Naive thymus-derived CD4-positive, alpha-beta T cell (primary cell): ENCODE measurements at regions of chr2 and their contacts with region 1.

Region 1: GRCh38 chr2:30711646-30712085 is 95.6 kb downstream of the CAPN13 start:
- DNase-seq: peak; percentile 50 to 89 (median 86)
- ATAC-seq: peak; percentile 96
- H3K4me3 ChIP-seq: no peak overlapping the region
- H3K4me3 Mint-ChIP-seq: no peak overlapping the region
- H3K27ac ChIP-seq: no peak overlapping the region
- H3K27ac Mint-ChIP-seq: peak overlapping the region in 1 of 9 donors; percentile 8
- H3K4me1 ChIP-seq: no peaks in the 10 kb centered on the region
- H3K4me1 Mint-ChIP-seq: peaks cover 0 to 8% (median 5%) of the 10 kb centered on the region in 7 donors
- H3K27me3 ChIP-seq: no peaks in the 10 kb centered on the region
- H3K27me3 Mint-ChIP-seq: peaks cover 0 to 4% (median 0%) of the 10 kb centered on the region in 5 donors

Region 2: DNA sequence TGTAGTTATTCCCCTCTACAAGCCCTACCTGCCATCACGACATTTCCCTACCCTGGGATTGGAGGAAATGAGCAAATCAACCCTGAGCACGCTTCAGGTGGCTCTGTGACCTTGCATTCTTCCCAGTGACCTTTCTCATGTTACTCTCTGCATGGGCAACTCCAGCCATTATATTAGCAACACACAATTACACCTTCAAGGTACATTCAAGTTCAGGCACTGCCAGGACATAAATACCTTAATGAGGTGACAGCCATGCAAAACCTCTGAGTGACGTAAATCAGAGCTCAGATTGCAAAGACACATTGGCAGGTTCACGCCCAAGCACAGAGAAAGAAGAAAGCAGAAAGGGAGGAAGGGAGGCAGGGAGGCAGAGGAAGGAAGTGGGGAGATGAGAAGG is 721.5 kb before region 1 on chr2:
- CTCF ChIA-PET with region 1: no interaction called
- POLR2A ChIA-PET with region 1: no interaction called
- intact Hi-C with region 1: no loop called
- DNase-seq: no peak
- ATAC-seq: no peak
- H3K4me3 ChIP-seq: no peak overlapping the region
- H3K4me3 Mint-ChIP-seq: no peak overlapping the region
- H3K27ac ChIP-seq: no peak overlapping the region
- H3K27ac Mint-ChIP-seq: no peak overlapping the region
- H3K4me1 ChIP-seq: no peaks in the 10 kb centered on the region
- H3K4me1 Mint-ChIP-seq: no peaks in the 10 kb centered on the region
- H3K27me3 ChIP-seq: no peaks in the 10 kb centered on the region
- H3K27me3 Mint-ChIP-seq: peaks cover 2 to 18% (median 12%) of the 10 kb centered on the region in 5 donors

Region 3: GRCh38 chr2:30106543-30106942 is 605.1 kb before region 1 on chr2:
- CTCF ChIA-PET with region 1: no interaction called
- POLR2A ChIA-PET with region 1: no interaction called
- intact Hi-C with region 1: no loop called
- DNase-seq: no peak
- ATAC-seq: no peak
- H3K4me3 ChIP-seq: no peak overlapping the region
- H3K4me3 Mint-ChIP-seq: no peak overlapping the region
- H3K27ac ChIP-seq: no peak overlapping the region
- H3K27ac Mint-ChIP-seq: no peak overlapping the region
- H3K4me1 ChIP-seq: no peaks in the 10 kb centered on the region
- H3K4me1 Mint-ChIP-seq: no peaks in the 10 kb centered on the region
- H3K27me3 ChIP-seq: no peaks in the 10 kb centered on the region
- H3K27me3 Mint-ChIP-seq: peaks cover 0 to 18% (median 5%) of the 10 kb centered on the region in 5 donors

Region 4: DNA sequence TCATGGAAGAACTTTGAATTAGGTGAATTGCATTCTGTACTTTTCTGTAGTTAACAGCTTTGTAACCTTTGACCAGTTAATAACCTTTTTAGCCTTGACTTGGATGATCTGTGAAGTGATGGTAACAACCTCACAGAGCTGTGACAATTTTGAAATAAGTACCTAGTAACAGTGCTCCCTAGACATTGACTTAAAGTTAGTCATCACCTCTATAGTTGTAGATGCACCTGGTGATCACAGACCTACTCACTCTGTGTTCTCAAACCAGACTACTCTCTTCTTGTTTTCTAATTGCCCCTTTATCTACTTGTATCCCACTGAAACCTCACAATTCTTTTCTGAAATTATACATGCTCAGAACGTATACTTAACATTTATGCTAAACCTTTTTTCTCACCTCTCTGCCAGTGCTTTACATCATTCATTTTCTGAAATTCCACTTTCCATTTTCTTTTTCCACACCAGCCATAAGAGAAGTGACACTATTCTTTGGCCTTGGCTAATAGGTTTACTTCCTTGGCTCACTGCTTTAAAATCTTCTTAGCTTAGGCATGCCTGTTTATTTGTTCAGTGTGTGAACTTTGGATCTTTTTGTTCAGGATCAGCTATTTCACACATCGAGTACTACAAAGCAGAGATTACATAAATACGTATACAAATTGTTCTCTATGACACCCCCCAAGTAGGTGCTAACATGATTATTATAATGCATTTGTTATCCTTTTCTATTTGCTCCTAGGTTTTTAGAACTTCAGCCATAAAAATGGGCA is 555.6 kb before region 1 on chr2:
- CTCF ChIA-PET with region 1: interaction called, 14 read pairs
- POLR2A ChIA-PET with region 1: no interaction called
- intact Hi-C with region 1: no loop called
- DNase-seq: no peak
- ATAC-seq: no peak
- H3K4me3 ChIP-seq: no peak overlapping the region
- H3K4me3 Mint-ChIP-seq: peak overlapping the region in 1 of 10 donors; percentile 19
- H3K27ac ChIP-seq: no peak overlapping the region
- H3K27ac Mint-ChIP-seq: peak overlapping the region in 6 of 9 donors; percentile 3 to 77 (median 44)
- H3K4me1 ChIP-seq: peaks cover 0 to 14% of the 10 kb centered on the region in 2 donors
- H3K4me1 Mint-ChIP-seq: peaks cover 11 to 58% (median 49%) of the 10 kb centered on the region in 7 donors
- H3K27me3 ChIP-seq: no peaks in the 10 kb centered on the region
- H3K27me3 Mint-ChIP-seq: no peaks in the 10 kb centered on the region

Region 5: GRCh38 chr2:30231212-30231995 is 480.3 kb before region 1 on chr2 and contains the start of gene LBH:
- CTCF ChIA-PET with region 1: interaction called, 5 read pairs
- POLR2A ChIA-PET with region 1: interaction called, 7 read pairs
- intact Hi-C with region 1: loop called (anchors 5 to 10 kb)
- DNase-seq: peak; percentile 74 to 92 (median 88)
- ATAC-seq: peak; percentile 72
- H3K4me3 ChIP-seq: peak within 1 kb of the TSS; percentile 75
- H3K4me3 Mint-ChIP-seq: peak within 1 kb of the TSS; percentile 87 to 98 (median 94)
- H3K27ac ChIP-seq: peak within 1 kb of the TSS; percentile 97
- H3K27ac Mint-ChIP-seq: peak within 1 kb of the TSS; percentile 87 to 100 (median 96)
- H3K4me1 ChIP-seq: peaks cover 49 to 55% of the 10 kb centered on the region in 2 donors
- H3K4me1 Mint-ChIP-seq: peaks cover 26 to 65% (median 57%) of the 10 kb centered on the region in 7 donors
- H3K27me3 ChIP-seq: no peaks in the 10 kb centered on the region
- H3K27me3 Mint-ChIP-seq: peaks cover 0 to 8% (median 0%) of the 10 kb centered on the region in 5 donors
- total RNA-seq, gene LBH: 146 to 517 (median 192) TPM

Region 6: GRCh38 chr2:30503007-30503694 is 208.5 kb before region 1 on chr2:
- CTCF ChIA-PET with region 1: interaction called, 3 read pairs
- POLR2A ChIA-PET with region 1: no interaction called
- intact Hi-C with region 1: loop called in 1 of 2 experiments (anchors 2 kb)
- DNase-seq: peak in 6 of 9 donors; percentile 34 to 65 (median 54)
- ATAC-seq: peak; percentile 96
- H3K4me3 ChIP-seq: no peak overlapping the region
- H3K4me3 Mint-ChIP-seq: peak overlapping the region in 9 of 10 donors; percentile 23 to 76 (median 65)
- H3K27ac ChIP-seq: peak overlapping the region; percentile 49
- H3K27ac Mint-ChIP-seq: peak overlapping the region in 8 of 9 donors; percentile 79 to 92 (median 85)
- H3K4me1 ChIP-seq: peaks cover 18 to 28% of the 10 kb centered on the region in 2 donors
- H3K4me1 Mint-ChIP-seq: peaks cover 22 to 51% (median 46%) of the 10 kb centered on the region in 7 donors
- H3K27me3 ChIP-seq: no peaks in the 10 kb centered on the region
- H3K27me3 Mint-ChIP-seq: no peaks in the 10 kb centered on the region

Region 7: DNA sequence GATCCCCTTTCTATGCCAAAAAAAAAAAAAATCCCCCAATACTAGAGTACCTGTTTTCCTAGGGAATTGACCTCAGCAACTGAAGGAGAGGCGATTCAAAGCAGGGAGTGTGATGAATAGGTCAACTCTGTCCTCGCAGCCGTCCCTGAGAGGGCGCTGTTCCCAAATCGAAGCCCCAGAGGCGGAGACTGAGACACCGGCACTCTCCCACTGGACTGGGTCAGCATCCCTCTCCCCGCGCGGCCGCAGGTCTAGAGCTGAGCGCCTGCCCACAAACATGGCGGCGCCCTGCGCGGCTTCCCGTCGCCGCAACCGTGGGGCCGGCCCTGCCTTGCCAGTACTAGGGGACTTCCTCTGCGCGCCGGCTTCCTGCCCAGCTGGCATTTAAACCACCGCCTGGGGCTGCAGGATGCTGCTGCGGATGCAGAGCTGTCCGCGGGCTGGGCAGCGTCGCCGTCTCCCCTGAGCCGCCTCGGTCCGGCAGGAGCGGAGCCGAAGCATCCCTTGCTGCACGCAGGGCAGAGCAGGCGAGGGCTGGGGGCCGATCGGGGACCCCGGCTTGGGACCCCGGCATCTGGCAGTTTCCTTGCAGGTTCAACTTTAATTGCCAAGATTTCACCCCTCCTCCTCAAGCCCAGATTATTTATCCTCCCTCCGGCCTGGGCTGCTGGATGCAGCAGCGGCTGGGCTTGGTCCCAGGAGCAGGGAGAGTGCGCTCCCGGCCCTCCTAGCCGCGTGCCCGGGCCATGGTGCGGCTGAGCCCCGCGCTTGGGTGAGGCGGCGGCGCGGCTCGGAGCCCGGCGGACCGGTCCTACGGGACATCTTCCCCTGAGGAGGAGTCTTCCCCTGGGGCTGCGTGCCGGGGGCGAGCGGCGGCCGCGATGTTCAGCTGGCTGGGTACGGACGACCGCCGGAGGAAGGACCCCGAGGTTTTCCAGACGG is 522.3 kb after region 1 on chr2 and contains the start of gene EHD3:
- CTCF ChIA-PET with region 1: no interaction called
- POLR2A ChIA-PET with region 1: no interaction called
- intact Hi-C with region 1: loop called in 1 of 2 experiments (anchors 1 kb)
- DNase-seq: peak; percentile 53 to 80 (median 67)
- ATAC-seq: peak; percentile 95
- H3K4me3 ChIP-seq: peak within 1 kb of the TSS; percentile 75
- H3K4me3 Mint-ChIP-seq: peak within 1 kb of the TSS; percentile 74 to 89 (median 83)
- H3K27ac ChIP-seq: peak within 1 kb of the TSS; percentile 32
- H3K27ac Mint-ChIP-seq: peak within 1 kb of the TSS; percentile 12 to 85 (median 72)
- H3K4me1 ChIP-seq: peaks cover 4 to 14% of the 10 kb centered on the region in 2 donors
- H3K4me1 Mint-ChIP-seq: peaks cover 8 to 33% (median 25%) of the 10 kb centered on the region in 7 donors
- H3K27me3 ChIP-seq: no peaks in the 10 kb centered on the region
- H3K27me3 Mint-ChIP-seq: peaks cover 0 to 22% (median 0%) of the 10 kb centered on the region in 5 donors
- total RNA-seq, gene EHD3: 1.6 to 4.5 (median 3.5) TPM

Region 8: DNA sequence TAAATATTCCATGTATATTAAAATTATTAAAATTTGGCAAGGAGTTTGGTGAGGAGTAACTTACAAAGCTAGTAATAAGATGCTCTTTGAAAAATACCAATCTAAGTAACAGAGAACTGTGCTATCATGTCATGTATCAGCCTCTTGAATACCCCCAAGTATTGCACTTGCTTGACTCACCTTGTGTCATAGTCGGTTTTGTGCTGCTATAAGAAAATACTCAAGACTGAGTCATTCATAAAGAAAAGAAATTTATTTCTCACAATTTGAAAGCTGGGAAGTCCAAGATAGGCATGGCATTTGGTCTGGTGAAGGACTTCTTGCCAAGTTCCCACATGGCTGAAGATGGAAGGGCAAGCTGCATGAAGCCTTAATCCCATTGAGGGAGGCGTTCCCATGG is 1119.9 kb after region 1 on chr2:
- CTCF ChIA-PET with region 1: no interaction called
- POLR2A ChIA-PET with region 1: no interaction called
- intact Hi-C with region 1: loop called (anchors 5 to 10 kb)
- DNase-seq: no peak
- ATAC-seq: no peak
- H3K4me3 ChIP-seq: no peak overlapping the region
- H3K4me3 Mint-ChIP-seq: no peak overlapping the region
- H3K27ac ChIP-seq: no peak overlapping the region
- H3K27ac Mint-ChIP-seq: no peak overlapping the region
- H3K4me1 ChIP-seq: no peaks in the 10 kb centered on the region
- H3K4me1 Mint-ChIP-seq: no peaks in the 10 kb centered on the region
- H3K27me3 ChIP-seq: no peaks in the 10 kb centered on the region
- H3K27me3 Mint-ChIP-seq: peaks cover 0 to 16% (median 10%) of the 10 kb centered on the region in 5 donors